WTC11 (cell line): ENCODE measurements at regions of chr18 and their contacts with region 1.

Region 1: DNA sequence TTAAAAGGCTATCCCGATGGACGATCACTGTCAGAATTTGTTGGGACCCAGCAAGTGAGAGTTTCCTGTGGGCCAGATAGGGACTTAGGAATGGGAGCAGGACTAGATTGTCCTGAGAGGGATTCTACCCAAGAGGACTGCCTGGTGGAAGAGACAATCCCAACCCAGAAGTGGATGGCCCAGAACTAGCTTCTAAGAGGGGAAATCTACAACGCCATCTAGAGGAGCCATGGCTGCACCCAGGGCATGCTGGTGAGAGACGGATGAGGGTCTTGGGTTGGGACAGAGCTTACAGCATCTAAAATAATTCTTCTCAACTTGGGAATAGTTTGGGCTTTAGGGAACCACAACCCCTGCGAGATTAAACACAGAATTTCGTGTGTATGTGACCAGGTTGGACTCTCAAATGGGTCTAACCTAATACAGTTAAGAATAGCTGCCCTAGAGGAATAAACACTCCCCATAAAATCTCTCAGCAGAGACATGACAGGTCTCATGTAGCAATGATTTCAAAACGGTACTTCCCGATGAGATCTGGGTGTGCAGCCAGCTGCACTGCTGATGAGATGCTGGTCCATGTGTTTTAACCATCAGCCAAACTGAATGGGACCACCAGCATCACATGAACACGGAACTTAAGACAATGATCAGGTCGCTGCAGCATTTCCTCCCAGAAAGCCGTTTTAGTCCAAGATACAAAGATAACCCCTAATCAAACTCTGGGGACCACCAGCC is 50.8 kb downstream of the CCBE1 start:
- DNase-seq: peak; percentile 37
- ATAC-seq: peak; percentile 89
- H3K4me3 Mint-ChIP-seq: no peak overlapping the region
- H3K27ac Mint-ChIP-seq: no peak overlapping the region
- H3K4me1 Mint-ChIP-seq: peaks cover 33% of the 10 kb centered on the region
- H3K27me3 Mint-ChIP-seq: no peaks in the 10 kb centered on the region
- CTCF ChIP-seq: 0 out of 2 replicates have a peak, but pooled peaks have one; percentile 17

Region 2: GRCh38 chr18:59555995-59556659 is 90.3 kb before region 1 on chr18:
- CTCF ChIA-PET with region 1: no interaction called
- POLR2A ChIA-PET with region 1: no interaction called
- DNase-seq: no peak
- ATAC-seq: no peak
- H3K4me3 Mint-ChIP-seq: no peak overlapping the region
- H3K27ac Mint-ChIP-seq: no peak overlapping the region
- H3K4me1 Mint-ChIP-seq: peaks cover 19% of the 10 kb centered on the region
- H3K27me3 Mint-ChIP-seq: peaks cover 3% of the 10 kb centered on the region; the same call in 1 of the 2 replicates
- CTCF ChIP-seq: no peak

Region 3: DNA sequence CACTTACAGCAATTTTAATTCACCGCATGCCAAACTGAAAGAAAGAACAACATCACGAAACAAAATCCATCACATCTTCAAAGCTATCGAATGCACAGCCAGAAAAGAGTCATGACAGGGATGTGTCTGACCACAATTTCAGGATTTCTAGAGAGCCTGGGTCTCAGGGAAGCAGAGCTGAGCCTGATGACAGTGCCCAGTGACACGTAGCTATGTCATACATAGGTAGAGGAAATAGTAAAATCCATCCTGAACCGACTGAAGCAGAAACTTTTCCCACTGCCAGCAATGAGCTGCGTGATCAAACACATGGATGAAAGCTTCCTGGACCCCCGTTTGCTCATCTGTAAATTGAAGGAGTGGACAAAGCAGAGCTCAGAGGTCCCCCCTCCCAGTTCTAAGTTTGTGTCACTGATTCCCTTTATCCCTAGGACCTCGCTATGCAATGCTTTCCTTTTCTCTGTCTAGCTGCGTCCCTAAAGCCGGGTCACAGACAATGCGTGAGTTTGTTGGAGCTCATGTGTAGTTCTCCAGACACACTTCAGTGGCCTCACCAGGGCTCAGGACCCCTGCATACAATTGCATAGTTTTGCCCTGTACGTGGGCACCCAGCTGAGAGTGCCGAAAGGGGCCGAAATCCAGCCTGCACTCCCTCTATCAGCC is 13.2 kb after region 1 on chr18:
- CTCF ChIA-PET with region 1: interaction called, 14 read pairs
- POLR2A ChIA-PET with region 1: no interaction called
- DNase-seq: no peak
- ATAC-seq: peak; percentile 48
- H3K4me3 Mint-ChIP-seq: no peak overlapping the region
- H3K27ac Mint-ChIP-seq: no peak overlapping the region
- H3K4me1 Mint-ChIP-seq: peaks cover 6% of the 10 kb centered on the region; the same call in 1 of the 2 replicates
- H3K27me3 Mint-ChIP-seq: no peaks in the 10 kb centered on the region
- CTCF ChIP-seq: no peak